Calu3 (cell line): ENCODE measurements at regions of chr1 and their contacts with region 1.

Region 1: GRCh38 chr1:241611063-241611462 is 29.1 kb downstream of the CHML start:
- DNase-seq: peak; percentile 31
- H3K4me3 Mint-ChIP-seq: no peak overlapping the region
- H3K27ac Mint-ChIP-seq: no peak overlapping the region
- H3K4me1 Mint-ChIP-seq: peaks cover 31% of the 10 kb centered on the region
- H3K27me3 Mint-ChIP-seq: no peaks in the 10 kb centered on the region
- CTCF ChIP-seq: peak; percentile 38

Region 2: DNA sequence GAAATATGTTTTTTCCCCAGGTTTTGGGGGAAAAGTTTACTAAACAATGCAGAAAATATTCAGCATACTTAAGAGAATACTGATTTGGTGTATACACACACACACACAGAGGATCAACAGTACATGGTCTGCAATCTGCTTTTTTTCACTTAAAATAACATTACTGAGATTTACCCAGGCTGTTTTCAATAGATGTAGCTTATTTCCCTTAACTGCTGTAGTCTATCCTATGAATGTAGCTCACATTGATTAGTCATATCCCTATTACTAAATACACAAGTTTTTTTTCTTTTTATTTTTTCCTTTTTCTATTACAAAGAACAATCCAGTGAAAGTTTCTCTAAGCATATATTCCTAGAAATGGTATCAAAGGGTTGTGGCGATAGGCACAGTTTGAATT is 732.4 kb before region 1 on chr1:
- CTCF ChIA-PET with region 1: no interaction called
- intact Hi-C with region 1: no loop called
- DNase-seq: no peak
- H3K4me3 Mint-ChIP-seq: no peak overlapping the region
- H3K27ac Mint-ChIP-seq: no peak overlapping the region
- H3K4me1 Mint-ChIP-seq: no peaks in the 10 kb centered on the region
- H3K27me3 Mint-ChIP-seq: no peaks in the 10 kb centered on the region
- CTCF ChIP-seq: no peak

Region 3: DNA sequence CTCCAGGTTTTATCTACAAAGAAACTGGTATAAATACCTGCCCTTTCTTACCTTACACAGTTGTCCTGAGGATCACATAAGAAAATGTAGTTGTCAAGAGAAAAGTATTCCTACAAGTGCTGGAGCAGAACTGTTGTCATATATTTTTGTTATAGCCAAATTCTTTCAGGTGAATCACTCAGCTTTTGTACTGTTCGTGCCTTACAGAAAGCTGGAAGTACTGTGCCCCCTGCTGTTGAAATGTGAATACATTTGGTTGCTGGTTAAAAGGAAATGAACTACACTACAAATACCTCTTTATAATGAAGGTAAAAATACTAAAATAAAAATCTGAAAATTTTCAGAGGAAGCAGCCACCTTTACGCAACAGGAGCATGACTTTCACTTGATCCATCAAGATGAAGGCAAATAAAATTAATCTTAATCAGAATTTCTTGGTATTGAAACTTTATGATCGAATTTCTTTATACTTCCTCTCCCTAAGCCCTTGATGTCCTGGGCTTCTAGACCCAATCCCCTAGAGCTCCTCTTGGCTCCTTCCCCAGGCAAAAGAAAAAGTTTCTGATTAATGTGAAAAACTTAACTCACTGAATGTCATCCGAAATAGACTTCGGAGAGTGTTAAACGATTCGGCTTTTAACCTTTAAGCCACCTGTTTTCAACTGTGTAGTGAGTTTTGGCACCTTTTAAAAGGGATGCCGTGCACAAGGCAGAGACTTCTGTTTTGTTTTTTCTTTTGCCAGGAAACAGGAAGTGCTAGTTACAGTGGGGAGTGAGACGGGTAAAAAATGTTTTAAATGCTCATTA is 16.6 kb after region 1 on chr1:
- CTCF ChIA-PET with region 1: interaction called, 29 read pairs
- intact Hi-C with region 1: loop called (anchors 1 kb)
- DNase-seq: peak; percentile 67
- H3K4me3 Mint-ChIP-seq: no peak overlapping the region
- H3K27ac Mint-ChIP-seq: no peak overlapping the region
- H3K4me1 Mint-ChIP-seq: peaks cover 37% of the 10 kb centered on the region
- H3K27me3 Mint-ChIP-seq: no peaks in the 10 kb centered on the region
- CTCF ChIP-seq: peak; percentile 75

Region 4: GRCh38 chr1:241640029-241640818 is 29.2 kb after region 1 on chr1 and contains the starts of genes CHML and OPN3:
- CTCF ChIA-PET with region 1: no interaction called
- intact Hi-C with region 1: no loop called
- DNase-seq: peak; percentile 99
- H3K4me3 Mint-ChIP-seq: peak within 1 kb of the TSS; percentile 85
- H3K27ac Mint-ChIP-seq: peak within 1 kb of the TSS; percentile 83
- H3K4me1 Mint-ChIP-seq: peaks cover 48% of the 10 kb centered on the region
- H3K27me3 Mint-ChIP-seq: no peaks in the 10 kb centered on the region
- CTCF ChIP-seq: no peak
- total RNA-seq, gene CHML: 28.2 and 30.4 TPM in 2 replicates
- total RNA-seq, gene OPN3: 15.3 and 22.0 TPM in 2 replicates

Region 5: DNA sequence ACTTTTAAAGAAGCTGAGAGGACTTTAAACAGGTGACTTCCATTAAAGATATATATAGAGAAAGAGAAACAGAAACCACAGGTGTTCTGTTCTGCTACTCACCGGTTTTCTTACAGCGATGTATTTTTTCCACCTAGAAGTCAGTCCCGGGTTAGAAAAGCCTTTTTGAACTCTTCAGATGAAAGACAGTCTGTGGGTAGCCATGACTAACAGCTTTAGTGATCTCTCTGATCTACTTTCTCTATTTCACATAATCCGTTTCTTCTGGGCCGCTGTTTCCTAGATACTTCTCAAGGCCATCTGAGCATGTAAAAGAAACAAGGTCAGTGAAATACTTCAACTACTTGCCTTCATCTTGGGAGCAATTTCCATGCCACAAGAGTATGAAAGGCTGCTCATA is 66.1 kb after region 1 on chr1:
- CTCF ChIA-PET with region 1: no interaction called
- intact Hi-C with region 1: no loop called
- DNase-seq: no peak
- H3K4me3 Mint-ChIP-seq: no peak overlapping the region
- H3K27ac Mint-ChIP-seq: no peak overlapping the region
- H3K4me1 Mint-ChIP-seq: peaks cover 3% of the 10 kb centered on the region
- H3K27me3 Mint-ChIP-seq: peaks cover 25% of the 10 kb centered on the region
- CTCF ChIP-seq: no peak

Region 6: GRCh38 chr1:241834733-241835377 is 223.8 kb after region 1 on chr1:
- CTCF ChIA-PET with region 1: interaction called, 9 read pairs
- intact Hi-C with region 1: loop called (anchors 1 kb)
- DNase-seq: peak; percentile 16
- H3K4me3 Mint-ChIP-seq: no peak overlapping the region
- H3K27ac Mint-ChIP-seq: no peak overlapping the region
- H3K4me1 Mint-ChIP-seq: peaks cover 8% of the 10 kb centered on the region
- H3K27me3 Mint-ChIP-seq: no peaks in the 10 kb centered on the region
- CTCF ChIP-seq: peak; percentile 37

Region 7: GRCh38 chr1:241895013-241895412 is 283.9 kb after region 1 on chr1:
- CTCF ChIA-PET with region 1: interaction called, 4 read pairs
- intact Hi-C with region 1: loop called (anchors 5 kb)
- DNase-seq: no peak
- H3K4me3 Mint-ChIP-seq: no peak overlapping the region
- H3K27ac Mint-ChIP-seq: peak overlapping the region; percentile 29
- H3K4me1 Mint-ChIP-seq: no peaks in the 10 kb centered on the region
- H3K27me3 Mint-ChIP-seq: no peaks in the 10 kb centered on the region
- CTCF ChIP-seq: no peak

Region 8: GRCh38 chr1:241985787-241986186 is 374.7 kb after region 1 on chr1:
- CTCF ChIA-PET with region 1: interaction called, 3 read pairs
- intact Hi-C with region 1: loop called (anchors 10 kb)
- DNase-seq: peak; percentile 60
- H3K4me3 Mint-ChIP-seq: no peak overlapping the region
- H3K27ac Mint-ChIP-seq: no peak overlapping the region
- H3K4me1 Mint-ChIP-seq: peaks cover 13% of the 10 kb centered on the region
- H3K27me3 Mint-ChIP-seq: no peaks in the 10 kb centered on the region
- CTCF ChIP-seq: peak; percentile 58